Psoas muscle (tissue), 8 donors: ENCODE measurements at regions of chr15 and their contacts with region 1.

Region 1: GRCh38 chr15:26391567-26392194 is 381.2 kb downstream of the GABRB3 start:
- DNase-seq: no peak
- ATAC-seq: peak in 2 of 4 donors; percentile 59 to 71
- H3K4me3 ChIP-seq: no peak overlapping the region
- H3K27ac ChIP-seq: no peak overlapping the region
- H3K4me1 ChIP-seq: no peaks in the 10 kb centered on the region
- H3K27me3 ChIP-seq: no peaks in the 10 kb centered on the region
- CTCF ChIP-seq: no peak

Region 2: GRCh38 chr15:26294059-26294689 is 97.5 kb before region 1 on chr15:
- intact Hi-C with region 1: no loop called
- DNase-seq: no peak
- ATAC-seq: no peak
- H3K4me3 ChIP-seq: no peak overlapping the region
- H3K27ac ChIP-seq: no peak overlapping the region
- H3K4me1 ChIP-seq: no peaks in the 10 kb centered on the region
- H3K27me3 ChIP-seq: peaks cover 0 to 2% (median 0%) of the 10 kb centered on the region in 3 donors
- CTCF ChIP-seq: no peak

Region 3: DNA sequence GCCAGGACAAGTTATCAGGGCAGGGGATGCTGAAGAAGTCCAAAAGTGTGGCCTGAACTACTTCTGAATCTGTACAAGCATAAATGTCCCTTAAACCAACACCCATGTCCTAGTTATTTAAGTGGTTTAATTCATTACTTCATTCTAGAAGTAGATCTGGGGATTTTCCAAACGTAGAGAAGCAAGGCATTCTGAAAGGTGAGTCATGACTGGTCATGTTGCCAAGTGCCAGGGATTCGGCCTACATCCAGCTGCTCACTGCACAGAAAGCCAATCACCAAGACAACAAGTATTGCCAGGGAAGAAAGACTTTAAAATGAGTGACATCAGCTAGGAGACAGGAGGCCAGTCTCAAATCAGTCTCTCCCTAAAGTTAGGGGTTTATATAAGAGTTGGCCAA is 15.4 kb before region 1 on chr15:
- intact Hi-C with region 1: loop called in 1 of 2 experiments (anchors 2 kb)
- DNase-seq: no peak
- ATAC-seq: no peak
- H3K4me3 ChIP-seq: no peak overlapping the region
- H3K27ac ChIP-seq: no peak overlapping the region
- H3K4me1 ChIP-seq: no peaks in the 10 kb centered on the region
- H3K27me3 ChIP-seq: no peaks in the 10 kb centered on the region
- CTCF ChIP-seq: no peak

Region 4: DNA sequence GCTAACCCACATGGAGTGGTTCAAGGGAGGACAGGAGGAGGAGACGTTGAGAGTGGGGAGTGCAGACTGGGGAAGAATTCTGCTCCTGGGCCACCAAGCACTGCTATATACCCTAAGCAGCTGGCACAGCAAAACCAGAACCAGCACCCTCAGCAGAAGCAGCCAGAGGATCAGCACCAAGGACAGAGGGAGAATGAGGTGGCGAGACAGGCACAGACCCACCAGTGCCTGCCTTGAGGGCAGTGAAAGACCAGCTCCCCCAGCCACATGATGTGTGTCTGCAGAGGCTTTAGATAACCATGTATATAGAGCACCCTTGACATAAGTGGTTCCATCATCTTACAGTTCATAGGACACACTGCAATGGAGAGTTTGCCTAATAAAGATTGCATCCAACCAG is 62.2 kb after region 1 on chr15:
- intact Hi-C with region 1: loop called in 1 of 2 experiments (anchors 10 kb)
- DNase-seq: no peak
- ATAC-seq: no peak
- H3K4me3 ChIP-seq: no peak overlapping the region
- H3K27ac ChIP-seq: no peak overlapping the region
- H3K4me1 ChIP-seq: no peaks in the 10 kb centered on the region
- H3K27me3 ChIP-seq: no peaks in the 10 kb centered on the region
- CTCF ChIP-seq: no peak